ENCODE measurements at regions of chr15 and their contacts with region 1.

Region 1: GRCh38 chr15:63752075-63752684 is 81.6 kb downstream of the HERC1 start:
- DNase-seq: peak; percentile 24 to 68 (median 39)
- H3K4me3 ChIP-seq: no peak overlapping the region
- H3K27ac ChIP-seq: no peak overlapping the region
- H3K4me1 ChIP-seq: no peaks in the 10 kb centered on the region
- H3K27me3 ChIP-seq: no peaks in the 10 kb centered on the region
- CTCF ChIP-seq: peak; percentile 42 to 86 (median 84)
- POLR2A ChIP-seq: no peak

Region 2: DNA sequence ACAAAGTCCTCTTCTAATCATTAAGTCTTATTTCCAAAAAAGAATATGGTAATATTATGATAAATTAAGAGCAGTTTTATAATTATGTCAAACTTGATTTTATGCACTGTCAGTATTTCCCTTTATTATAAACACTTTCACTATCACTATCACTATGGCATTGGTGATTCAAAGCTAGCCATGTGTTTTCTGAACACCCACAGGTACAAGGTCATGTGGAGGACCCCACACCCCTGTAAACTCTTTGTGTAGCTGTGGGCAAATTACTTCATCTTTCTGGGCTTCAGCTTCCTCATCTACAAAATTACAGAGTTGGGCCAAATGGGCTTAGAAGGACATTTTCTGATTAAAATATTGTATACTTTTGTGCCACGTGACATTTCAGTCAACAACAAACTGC is 113.3 kb before region 1 on chr15:
- intact Hi-C with region 1: no loop called
- DNase-seq: no peak
- H3K4me3 ChIP-seq: no peak overlapping the region
- H3K27ac ChIP-seq: no peak overlapping the region
- H3K4me1 ChIP-seq: no peaks in the 10 kb centered on the region
- H3K27me3 ChIP-seq: no peaks in the 10 kb centered on the region
- CTCF ChIP-seq: no peak
- POLR2A ChIP-seq: no peak

Region 3: GRCh38 chr15:63655683-63656372 is 96.4 kb before region 1 on chr15:
- intact Hi-C with region 1: no loop called
- DNase-seq: no peak
- H3K4me3 ChIP-seq: no peak overlapping the region
- H3K27ac ChIP-seq: no peak overlapping the region
- H3K4me1 ChIP-seq: no peaks in the 10 kb centered on the region
- H3K27me3 ChIP-seq: no peaks in the 10 kb centered on the region
- CTCF ChIP-seq: no peak
- POLR2A ChIP-seq: no peak

Region 4: DNA sequence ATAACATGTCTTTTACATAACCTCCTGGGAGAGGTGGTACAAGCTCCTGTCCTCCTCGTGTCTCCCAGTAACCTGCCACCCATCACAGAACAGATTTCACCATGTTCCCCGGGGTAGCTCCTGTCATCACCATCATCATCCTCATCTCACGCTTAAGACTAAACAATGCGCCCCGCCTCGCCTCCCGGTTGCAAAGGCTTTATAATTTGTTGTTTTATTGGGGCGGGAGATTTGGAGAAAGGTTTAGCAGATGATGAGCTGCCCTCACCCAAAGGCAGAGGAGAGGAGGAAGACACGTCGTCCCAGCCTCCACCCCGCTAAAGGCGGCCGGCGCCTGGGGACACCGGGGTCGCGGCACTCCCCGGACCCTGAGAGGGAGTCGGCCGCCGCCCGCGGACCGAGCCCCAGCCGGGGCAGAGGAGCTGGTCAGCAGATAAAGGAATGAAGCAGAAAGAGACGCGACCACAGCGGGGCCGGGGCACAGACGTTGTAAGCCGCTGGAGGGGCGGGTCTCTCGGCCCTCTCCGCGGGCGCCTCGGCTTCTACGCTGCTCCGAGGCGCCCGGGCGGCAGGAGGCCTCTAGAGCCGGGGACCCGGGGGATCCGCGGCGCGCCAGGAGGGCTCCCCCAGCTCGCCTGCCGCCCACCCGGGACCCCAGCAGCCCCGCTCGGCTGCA is 81.0 kb after region 1 on chr15:
- intact Hi-C with region 1: loop called in 1 of 2 experiments (anchors 10 kb)
- DNase-seq: peak; percentile 25 to 65 (median 51)
- H3K4me3 ChIP-seq: peak overlapping the region; percentile 7 to 97 (median 62)
- H3K27ac ChIP-seq: peak overlapping the region; percentile 34 to 97 (median 93)
- H3K4me1 ChIP-seq: peaks cover 15 to 44% of the 10 kb centered on the region in 2 donors
- H3K27me3 ChIP-seq: no peaks in the 10 kb centered on the region
- CTCF ChIP-seq: no peak
- POLR2A ChIP-seq: no peak

Region 5: GRCh38 chr15:63891079-63891767 is 139.0 kb after region 1 on chr15:
- intact Hi-C with region 1: loop called (anchors 5 to 10 kb)
- DNase-seq: peak; percentile 71 to 96 (median 83)
- H3K4me3 ChIP-seq: no peak overlapping the region
- H3K27ac ChIP-seq: no peak overlapping the region
- H3K4me1 ChIP-seq: peaks cover 0 to 3% of the 10 kb centered on the region in 2 donors
- H3K27me3 ChIP-seq: no peaks in the 10 kb centered on the region
- CTCF ChIP-seq: peak; percentile 80 to 91 (median 86)
- POLR2A ChIP-seq: no peak

Region 6: DNA sequence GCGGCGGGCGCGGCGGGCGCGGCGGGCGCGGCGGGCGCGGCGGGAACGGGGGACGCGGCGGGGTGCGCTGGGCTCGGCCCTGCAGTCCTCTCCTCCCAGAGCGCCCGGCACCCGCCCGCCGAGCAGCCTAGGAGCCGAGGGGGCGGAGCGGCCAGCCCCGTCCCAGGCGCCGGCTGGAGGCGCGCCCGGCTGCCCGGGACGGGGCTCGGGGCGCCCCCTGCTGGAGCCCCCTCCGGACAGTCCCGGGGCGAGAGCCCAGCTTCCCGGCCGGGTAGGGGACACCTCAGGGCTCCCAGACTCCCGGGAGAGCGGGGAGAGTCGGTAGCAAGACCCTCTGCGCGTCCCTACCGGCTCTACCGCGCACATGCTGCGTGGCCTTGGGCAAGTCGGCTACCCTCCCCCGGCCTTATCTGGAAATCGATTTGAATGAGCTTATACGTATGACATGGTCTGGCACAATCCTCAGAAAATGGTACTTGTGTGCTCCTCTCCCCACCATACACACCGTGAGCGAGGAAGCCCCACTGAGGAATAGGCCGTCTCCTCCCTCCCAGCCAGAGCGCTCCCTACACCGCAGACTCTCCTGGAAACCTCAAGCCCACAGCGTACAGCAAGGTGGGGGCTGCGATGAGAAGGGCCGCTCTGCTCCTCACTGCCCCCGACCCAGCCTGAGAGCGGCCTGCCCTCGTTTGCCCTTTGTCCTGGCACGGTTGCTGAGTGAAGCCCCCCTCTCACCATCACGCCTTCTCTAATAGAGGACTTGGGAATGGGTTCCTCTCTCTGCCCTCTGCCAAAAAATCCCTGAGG is 294.4 kb after region 1 on chr15 and contains the start of gene DAPK2:
- intact Hi-C with region 1: loop called (anchors 5 to 10 kb)
- DNase-seq: peak; percentile 59 to 79 (median 70)
- H3K4me3 ChIP-seq: peak within 1 kb of the TSS in 2 of 4 donors; percentile 32 to 91
- H3K27ac ChIP-seq: peak within 1 kb of the TSS in 1 of 5 donors; percentile 70
- H3K4me1 ChIP-seq: peaks cover 0 to 3% of the 10 kb centered on the region in 2 donors
- H3K27me3 ChIP-seq: no peaks in the 10 kb centered on the region
- CTCF ChIP-seq: peak; percentile 22 to 82 (median 60)
- POLR2A ChIP-seq: peak in 1 of 2 donors; percentile 22
- total RNA-seq, gene DAPK2: 1.2 to 8.4 (median 5.9) TPM

Region 7: DNA sequence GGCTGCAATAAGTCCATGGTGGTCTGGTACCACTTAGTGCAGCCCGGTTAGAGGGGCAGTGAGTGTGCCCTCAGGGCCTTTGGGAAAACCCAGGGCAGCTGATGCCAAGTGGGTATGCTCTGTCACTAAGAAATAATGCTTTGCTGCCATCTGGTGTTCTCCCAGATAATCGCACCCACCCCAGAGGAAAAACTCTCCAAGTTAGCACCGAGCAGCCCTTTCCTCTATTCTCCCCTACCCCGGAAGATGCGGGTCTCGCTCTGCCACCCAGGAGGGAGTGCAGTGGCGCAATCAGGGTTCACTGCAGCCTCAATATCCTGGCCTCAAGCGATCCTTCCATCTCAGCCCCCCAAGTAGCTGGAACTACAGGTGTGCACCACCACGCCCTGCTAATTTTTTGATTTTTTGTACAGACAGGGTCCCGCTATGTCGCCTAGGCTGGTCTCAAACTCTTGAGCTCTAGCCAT is 315.4 kb after region 1 on chr15:
- intact Hi-C with region 1: loop called in 1 of 2 experiments (anchors 5 kb)
- DNase-seq: peak; percentile 63 to 88 (median 71)
- H3K4me3 ChIP-seq: no peak overlapping the region
- H3K27ac ChIP-seq: no peak overlapping the region
- H3K4me1 ChIP-seq: peaks cover 31 to 35% of the 10 kb centered on the region in 2 donors
- H3K27me3 ChIP-seq: no peaks in the 10 kb centered on the region
- CTCF ChIP-seq: peak; percentile 77 to 89 (median 84)
- POLR2A ChIP-seq: no peak

Measured in adrenal gland (tissue), 19 donors.